ENCODE measurements at regions of chr2 and their contacts with region 1.

Region 1: DNA sequence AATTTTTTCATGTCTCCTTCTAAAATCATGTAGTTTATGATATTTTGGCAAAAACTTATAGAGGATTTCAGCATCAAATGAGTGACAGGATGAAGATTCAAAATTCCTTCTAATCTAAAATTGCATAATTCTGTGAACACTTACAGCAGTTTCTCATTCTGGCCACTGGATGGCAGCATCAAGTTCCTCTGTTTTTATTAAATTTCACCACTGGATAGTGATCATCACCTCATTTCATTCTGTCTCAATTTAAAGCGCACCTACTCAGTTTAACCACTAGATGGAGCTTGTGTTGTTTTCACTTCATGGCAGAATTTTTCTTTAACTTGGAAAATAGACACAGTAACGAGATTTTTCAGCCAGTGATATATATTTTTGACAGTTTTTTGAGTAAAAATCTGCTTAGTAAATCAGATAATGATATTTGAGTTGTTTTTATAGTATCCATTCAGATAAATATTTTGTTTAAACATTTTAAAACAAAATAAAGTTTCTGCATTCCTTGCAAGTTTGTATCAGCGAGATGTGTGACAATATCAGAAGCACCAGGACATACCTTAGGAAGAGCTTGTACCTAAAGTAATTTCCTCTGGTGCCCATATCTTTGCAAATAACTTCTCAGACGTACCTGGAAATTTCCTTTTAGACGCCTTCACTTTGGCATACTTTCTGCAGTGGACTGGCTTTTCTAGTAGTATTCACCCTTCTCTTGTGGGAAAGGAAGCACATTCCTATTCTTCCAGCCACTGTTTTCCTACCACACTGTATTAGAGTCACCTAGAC is 94.7 kb upstream of the ARHGAP15 start:
- DNase-seq: peak; percentile 48
- H3K4me3 Mint-ChIP-seq: no peak overlapping the region
- H3K27ac Mint-ChIP-seq: no peak overlapping the region
- H3K4me1 Mint-ChIP-seq: peaks cover 9% of the 10 kb centered on the region
- H3K27me3 Mint-ChIP-seq: no peaks in the 10 kb centered on the region

Region 2: DNA sequence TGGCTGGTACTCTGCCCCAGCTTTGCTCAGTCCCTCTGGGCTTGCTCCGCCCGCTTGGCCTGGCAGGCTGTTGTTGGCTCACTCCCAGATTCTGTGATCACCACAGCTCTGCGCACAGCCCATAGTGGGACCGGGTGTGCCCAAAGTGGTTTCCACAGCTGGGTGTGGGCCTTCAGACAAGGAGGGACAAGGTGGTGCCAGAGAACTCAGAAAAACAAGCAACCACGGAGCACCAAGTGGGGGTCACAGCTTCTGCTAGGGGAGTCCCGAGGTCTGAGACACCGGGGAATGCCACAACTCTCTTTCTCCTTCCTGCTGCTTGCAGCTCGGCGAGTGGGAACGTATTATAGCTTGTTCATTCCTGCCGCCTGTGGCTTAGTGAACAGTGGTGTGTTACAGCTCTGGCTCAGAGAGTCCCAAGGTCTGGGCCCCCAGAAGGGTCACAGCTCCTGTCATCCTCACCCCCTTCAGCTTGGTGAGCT is 166.2 kb before region 1 on chr2:
- intact Hi-C with region 1: no loop called
- DNase-seq: no peak
- H3K4me3 Mint-ChIP-seq: no peak overlapping the region
- H3K27ac Mint-ChIP-seq: no peak overlapping the region
- H3K4me1 Mint-ChIP-seq: no peaks in the 10 kb centered on the region
- H3K27me3 Mint-ChIP-seq: peaks cover 2% of the 10 kb centered on the region

Region 3: DNA sequence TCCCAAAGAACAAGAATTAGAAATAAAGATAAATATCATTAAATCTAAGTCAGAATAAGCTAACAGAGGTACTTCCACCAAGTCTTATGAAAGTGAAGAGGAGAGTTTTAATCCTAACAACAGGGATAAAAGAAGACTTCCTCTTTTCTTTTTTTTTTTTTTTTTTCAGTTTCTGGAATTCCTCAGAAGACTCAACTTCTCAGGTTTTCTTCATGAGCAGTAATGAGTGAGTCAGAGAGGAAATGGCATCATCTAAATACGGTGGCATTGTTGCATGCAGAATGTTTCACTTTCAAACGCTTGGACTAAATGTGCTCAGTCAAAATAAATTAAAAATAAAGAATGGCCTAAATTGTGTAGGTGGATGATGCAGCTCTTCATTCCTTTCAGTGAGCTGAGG is 49.2 kb after region 1 on chr2:
- intact Hi-C with region 1: loop called (anchors 2 kb)
- DNase-seq: no peak
- H3K4me3 Mint-ChIP-seq: no peak overlapping the region
- H3K27ac Mint-ChIP-seq: no peak overlapping the region
- H3K4me1 Mint-ChIP-seq: peaks cover 32% of the 10 kb centered on the region
- H3K27me3 Mint-ChIP-seq: peaks cover 3% of the 10 kb centered on the region

Region 4: GRCh38 chr2:143217512-143218115 is 183.1 kb after region 1 on chr2:
- intact Hi-C with region 1: loop called (anchors 1 kb)
- DNase-seq: no peak
- H3K4me3 Mint-ChIP-seq: no peak overlapping the region
- H3K27ac Mint-ChIP-seq: peak overlapping the region; percentile 61
- H3K4me1 Mint-ChIP-seq: peaks cover 51% of the 10 kb centered on the region
- H3K27me3 Mint-ChIP-seq: no peaks in the 10 kb centered on the region

Region 5: GRCh38 chr2:143284087-143284675 is 249.7 kb after region 1 on chr2:
- intact Hi-C with region 1: loop called (anchors 1 kb)
- DNase-seq: no peak
- H3K4me3 Mint-ChIP-seq: no peak overlapping the region
- H3K27ac Mint-ChIP-seq: no peak overlapping the region
- H3K4me1 Mint-ChIP-seq: peaks cover 30% of the 10 kb centered on the region
- H3K27me3 Mint-ChIP-seq: no peaks in the 10 kb centered on the region

Region 6: GRCh38 chr2:144414324-144414845 is 1379.9 kb after region 1 on chr2:
- intact Hi-C with region 1: no loop called
- DNase-seq: no peak
- H3K4me3 Mint-ChIP-seq: no peak overlapping the region
- H3K27ac Mint-ChIP-seq: peak overlapping the region; percentile 55
- H3K4me1 Mint-ChIP-seq: peaks cover 29% of the 10 kb centered on the region
- H3K27me3 Mint-ChIP-seq: no peaks in the 10 kb centered on the region

Measured in activated T-helper 1 cell treated with anti-CD3 and anti-CD28 coated beads, Interleukin-12 subunit alpha, Interleukin-12 subunit beta, Interleukin-2, Interleukin-4 antibody, amounts not matched to agents 30 ng/mL and 10 ng/mL and 1 ng/mL, durations not matched to agents 14 hours and 24 hours and 36 hours (primary cell).